SK-N-SH (cell line): ENCODE measurements at regions of chr1 and their contacts with region 1.

Region 1: GRCh38 chr1:222634180-222635013 is 16.5 kb downstream of the MIA3 start:
- DNase-seq: peak; percentile 56
- H3K4me3 ChIP-seq: no peak overlapping the region; a peak in 1 of 4 replicates
- H3K27ac ChIP-seq: no peak overlapping the region
- H3K4me1 ChIP-seq: no peaks in the 10 kb centered on the region
- H3K27me3 ChIP-seq: no peaks in the 10 kb centered on the region
- CTCF ChIP-seq: peak; percentile 93
- EP300 ChIP-seq: no peak
- RAD21 ChIP-seq: peak; percentile 83

Region 2: GRCh38 chr1:222465211-222466041 is 169.0 kb before region 1 on chr1:
- CTCF ChIA-PET with region 1: interaction called, 63 read pairs
- POLR2A ChIA-PET with region 1: interaction called, 9 read pairs
- DNase-seq: peak; percentile 96
- H3K4me3 ChIP-seq: peak overlapping the region; percentile 64 to 65
- H3K27ac ChIP-seq: peak overlapping the region; percentile 94 to 97
- H3K4me1 ChIP-seq: peaks cover 0 to 4% of the 10 kb centered on the region in 2 experiments; a peak in 2 of 4 replicates
- H3K27me3 ChIP-seq: no peaks in the 10 kb centered on the region
- CTCF ChIP-seq: peak; percentile 97
- EP300 ChIP-seq: no peak; a peak in 1 of 4 replicates
- RAD21 ChIP-seq: peak; percentile 95

Region 3: DNA sequence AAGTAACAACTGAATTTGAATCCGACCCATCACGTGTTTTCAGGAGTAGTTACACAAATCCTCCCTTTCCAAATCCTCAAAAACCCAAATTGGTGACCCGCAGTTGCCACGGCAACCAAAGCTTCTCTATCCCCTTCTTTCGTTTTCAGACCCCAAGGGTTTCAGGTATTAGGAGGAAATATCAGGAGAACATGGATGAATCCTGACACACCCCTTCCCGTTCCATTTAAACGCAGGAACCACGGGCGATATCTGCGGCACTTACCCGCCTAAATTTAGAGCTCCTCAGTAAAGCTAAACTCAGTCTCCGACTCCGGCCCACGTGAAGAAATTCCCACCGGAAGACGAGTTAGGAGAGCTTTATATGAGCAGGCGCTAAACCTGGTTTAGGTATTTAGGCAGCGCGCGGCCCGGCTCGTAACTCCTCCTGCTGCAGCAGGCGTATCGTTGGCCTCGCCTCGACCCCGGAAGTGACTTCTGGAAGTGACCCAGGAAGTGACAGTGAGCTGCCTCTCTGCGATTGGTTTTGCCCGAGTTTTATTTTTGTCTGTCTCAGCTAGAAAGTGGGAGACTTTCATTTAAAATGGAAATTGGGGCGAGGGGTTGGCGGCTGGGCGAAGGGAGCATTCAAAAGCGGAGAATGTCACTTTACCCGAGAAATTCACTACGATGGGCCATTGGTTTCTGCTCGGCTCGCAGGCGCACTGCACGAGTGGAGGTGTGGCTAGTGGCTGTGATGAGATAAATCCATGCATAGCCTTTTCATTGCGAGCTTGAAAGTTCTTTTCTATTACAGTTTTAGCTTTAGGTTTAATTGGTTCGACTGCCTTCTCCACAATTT is 44.7 kb before region 1 on chr1 and contains the start of gene TAF1A:
- CTCF ChIA-PET with region 1: interaction called, 10 read pairs
- POLR2A ChIA-PET with region 1: no interaction called
- DNase-seq: peak; percentile 77
- H3K4me3 ChIP-seq: peak within 1 kb of the TSS; percentile 69 to 90
- H3K27ac ChIP-seq: peak within 1 kb of the TSS; percentile 74 to 94
- H3K4me1 ChIP-seq: peaks cover 0 to 14% of the 10 kb centered on the region in 2 experiments; a peak in 3 of 4 replicates
- H3K27me3 ChIP-seq: no peaks in the 10 kb centered on the region
- CTCF ChIP-seq: no peak
- EP300 ChIP-seq: no peak
- RAD21 ChIP-seq: no peak; the same call in 1 of the 2 replicates
- polyA plus RNA-seq, gene TAF1A: 4.6 and 6.3 TPM in 2 replicates

Region 4: GRCh38 chr1:222617367-222617951 is 16.9 kb before region 1 on chr1:
- CTCF ChIA-PET with region 1: interaction called, 26 read pairs
- POLR2A ChIA-PET with region 1: no interaction called
- DNase-seq: no peak
- H3K4me3 ChIP-seq: peak overlapping the region; percentile 56 to 59
- H3K27ac ChIP-seq: peak overlapping the region; percentile 53 to 73
- H3K4me1 ChIP-seq: peaks cover 5 to 10% of the 10 kb centered on the region in 2 experiments; a peak in 2 of 4 replicates
- H3K27me3 ChIP-seq: no peaks in the 10 kb centered on the region
- CTCF ChIP-seq: no peak
- EP300 ChIP-seq: peak in 1 of 2 experiments; percentile 4; a peak in 1 of 4 replicates
- RAD21 ChIP-seq: no peak

Region 5: DNA sequence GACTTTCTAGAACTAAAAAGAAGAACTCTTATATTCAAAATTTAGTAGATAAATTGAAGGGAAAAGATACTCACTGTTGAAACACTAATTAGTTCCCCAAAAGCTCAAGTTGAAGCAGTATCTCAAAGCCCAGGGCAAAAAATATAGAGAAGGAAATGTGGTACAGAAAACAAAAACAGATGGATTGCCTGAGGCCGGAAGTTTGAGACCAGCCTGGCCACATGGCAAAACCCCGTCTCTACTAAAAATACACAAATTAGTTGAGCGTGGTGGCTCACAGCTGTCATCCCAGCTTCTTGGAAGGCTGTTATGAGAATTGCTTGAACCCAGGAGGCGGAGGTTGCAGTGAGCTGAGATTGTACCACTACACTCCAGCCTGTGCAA is 138.6 kb after region 1 on chr1:
- CTCF ChIA-PET with region 1: no interaction called
- POLR2A ChIA-PET with region 1: no interaction called
- DNase-seq: no peak
- H3K4me3 ChIP-seq: no peak overlapping the region
- H3K27ac ChIP-seq: no peak overlapping the region
- H3K4me1 ChIP-seq: no peaks in the 10 kb centered on the region
- H3K27me3 ChIP-seq: no peaks in the 10 kb centered on the region; the same call in 1 of the 2 replicates
- CTCF ChIP-seq: no peak
- EP300 ChIP-seq: no peak
- RAD21 ChIP-seq: no peak

Region 6: GRCh38 chr1:222829868-222830267 is 195.5 kb after region 1 on chr1:
- CTCF ChIA-PET with region 1: no interaction called
- POLR2A ChIA-PET with region 1: no interaction called
- DNase-seq: no peak
- H3K4me3 ChIP-seq: no peak overlapping the region
- H3K27ac ChIP-seq: peak overlapping the region; percentile 17 to 40; a peak in 2 of 4 replicates
- H3K4me1 ChIP-seq: peaks cover 4 to 12% of the 10 kb centered on the region in 2 experiments; a peak in 1 of 4 replicates
- H3K27me3 ChIP-seq: no peaks in the 10 kb centered on the region
- CTCF ChIP-seq: no peak
- EP300 ChIP-seq: peak; percentile 49 to 51; a peak in 3 of 4 replicates
- RAD21 ChIP-seq: no peak